HepG2 (cell line): ENCODE measurements at regions of chr4 and their contacts with region 1.

Region 1: DNA sequence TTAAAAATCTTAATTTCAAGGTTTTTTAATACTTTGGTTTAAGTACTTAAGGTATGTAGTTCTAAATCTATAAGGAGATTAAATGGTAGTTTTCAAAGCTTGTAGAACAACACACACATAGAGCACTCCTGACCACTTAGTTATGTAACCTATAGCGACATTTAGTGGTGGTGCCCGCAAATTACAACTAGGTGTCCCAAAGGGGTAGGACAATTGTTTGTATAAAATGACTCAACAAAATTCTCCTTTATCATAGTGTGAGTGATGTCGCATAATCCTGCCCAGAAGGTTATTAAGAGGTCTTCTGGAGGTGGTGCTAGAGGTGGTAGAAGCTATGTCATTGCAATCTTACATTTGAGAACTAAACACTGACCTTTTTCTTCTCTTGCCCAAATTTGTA is 373.0 kb upstream of the RASGEF1B start:
- DNase-seq: peak; percentile 70
- ATAC-seq: peak; percentile 93
- H3K4me3 ChIP-seq: no peak overlapping the region
- H3K27ac ChIP-seq: no peak overlapping the region
- H3K4me1 ChIP-seq: no peaks in the 10 kb centered on the region
- H3K27me3 ChIP-seq: no peaks in the 10 kb centered on the region
- CTCF ChIP-seq: peak; percentile 73
- EP300 ChIP-seq: no peak
- POLR2A ChIP-seq: no peak
- RAD21 ChIP-seq: peak; percentile 46; the same call in 1 of the 2 replicates

Region 2: GRCh38 chr4:81405894-81406401 is 438.8 kb before region 1 on chr4:
- CTCF ChIA-PET with region 1: interaction called, 17 read pairs
- POLR2A ChIA-PET with region 1: no interaction called
- in situ Hi-C with region 1: no loop called
- intact Hi-C with region 1: loop called (anchors 1 kb)
- DNase-seq: peak; percentile 81
- ATAC-seq: peak; percentile 78
- H3K4me3 ChIP-seq: no peak overlapping the region
- H3K27ac ChIP-seq: no peak overlapping the region
- H3K4me1 ChIP-seq: no peaks in the 10 kb centered on the region
- H3K27me3 ChIP-seq: no peaks in the 10 kb centered on the region; a peak in 1 of 5 replicates
- CTCF ChIP-seq: peak; percentile 75
- EP300 ChIP-seq: no peak
- POLR2A ChIP-seq: no peak
- RAD21 ChIP-seq: peak; percentile 62; the same call in 1 of the 2 replicates